ENCODE measurements at regions of chrX and their contacts with region 1.

Region 1: GRCh38 chrX:103666202-103667107 is 20.0 kb downstream of the MORF4L2 start:
- DNase-seq: peak; percentile 29
- H3K4me3 ChIP-seq: no peak overlapping the region
- H3K27ac ChIP-seq: no peak overlapping the region
- H3K4me1 ChIP-seq: no peaks in the 10 kb centered on the region
- H3K27me3 ChIP-seq: no peaks in the 10 kb centered on the region
- CTCF ChIP-seq: no peak

Region 2: GRCh38 chrX:103629318-103630170 is 36.9 kb before region 1 on chrX:
- CTCF ChIA-PET with region 1: no interaction called
- dilution Hi-C with region 1: no loop called
- in situ Hi-C with region 1: no loop called
- intact Hi-C with region 1: loop called (anchors 5 kb)
- DNase-seq: peak; percentile 46
- H3K4me3 ChIP-seq: peak overlapping the region; percentile 43 to 71 (median 46)
- H3K27ac ChIP-seq: peak overlapping the region; percentile 52
- H3K4me1 ChIP-seq: peaks cover 16% of the 10 kb centered on the region
- H3K27me3 ChIP-seq: no peaks in the 10 kb centered on the region
- CTCF ChIP-seq: peak; percentile 14 to 56

Region 3: GRCh38 chrX:103817502-103817901 is 151.0 kb after region 1 on chrX:
- CTCF ChIA-PET with region 1: no interaction called
- dilution Hi-C with region 1: no loop called
- in situ Hi-C with region 1: no loop called
- intact Hi-C with region 1: no loop called
- DNase-seq: no peak
- H3K4me3 ChIP-seq: no peak overlapping the region
- H3K27ac ChIP-seq: no peak overlapping the region
- H3K4me1 ChIP-seq: no peaks in the 10 kb centered on the region
- H3K27me3 ChIP-seq: no peaks in the 10 kb centered on the region
- CTCF ChIP-seq: peak; percentile 55 to 64

Measured in mammary epithelial cell (primary cell).